Left ventricle myocardium superior (tissue), 1 donor: ENCODE measurements at regions of chr5 and their contacts with region 1.

Region 1: GRCh38 chr5:131679913-131680312 is 44.9 kb upstream of the RAPGEF6 start:
- DNase-seq: no peak
- ATAC-seq: no peak

Region 2: DNA sequence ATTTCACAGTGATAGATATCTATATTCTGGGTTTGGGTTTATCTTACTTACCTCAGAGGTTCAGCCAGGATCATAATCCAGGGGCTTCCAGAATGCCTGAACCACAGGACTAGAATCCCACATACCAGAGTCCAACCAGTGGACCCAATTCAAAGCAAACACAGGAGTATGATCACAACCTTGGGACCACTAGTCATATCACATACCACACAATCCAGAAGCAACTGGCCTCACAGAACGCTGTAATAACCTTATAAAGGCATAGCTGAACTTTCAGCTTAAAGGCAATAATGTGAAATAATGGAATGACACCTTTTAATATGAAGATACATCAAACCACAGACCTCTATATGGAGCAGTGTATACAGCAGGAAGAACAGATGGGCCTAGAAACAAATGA is 70.1 kb before region 1 on chr5:
- intact Hi-C with region 1: loop called (anchors 10 kb)
- DNase-seq: no peak
- ATAC-seq: no peak